Head of caudate nucleus (tissue), 42 donors: ENCODE measurements at regions of chr4 and their contacts with region 1.

Region 1: GRCh38 chr4:81460191-81460701 is 11.5 kb downstream of the RASGEF1B start:
- DNase-seq: peak in 22 of 42 donors; percentile 10 to 72 (median 48)

Region 2: DNA sequence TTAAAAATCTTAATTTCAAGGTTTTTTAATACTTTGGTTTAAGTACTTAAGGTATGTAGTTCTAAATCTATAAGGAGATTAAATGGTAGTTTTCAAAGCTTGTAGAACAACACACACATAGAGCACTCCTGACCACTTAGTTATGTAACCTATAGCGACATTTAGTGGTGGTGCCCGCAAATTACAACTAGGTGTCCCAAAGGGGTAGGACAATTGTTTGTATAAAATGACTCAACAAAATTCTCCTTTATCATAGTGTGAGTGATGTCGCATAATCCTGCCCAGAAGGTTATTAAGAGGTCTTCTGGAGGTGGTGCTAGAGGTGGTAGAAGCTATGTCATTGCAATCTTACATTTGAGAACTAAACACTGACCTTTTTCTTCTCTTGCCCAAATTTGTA is 384.5 kb after region 1 on chr4:
- intact Hi-C with region 1: loop called (anchors 5 kb)
- DNase-seq: peak; percentile 8 to 93 (median 72)